ENCODE measurements at regions of chr9 and their contacts with region 1.

Region 1: GRCh38 chr9:95355500-95355899 is 38.0 kb upstream of the FANCC start:
- DNase-seq: no peak
- ATAC-seq: no peak

Region 2: GRCh38 chr9:95409650-95410426 is 54.3 kb after region 1 on chr9:
- intact Hi-C with region 1: loop called (anchors 5 kb)
- DNase-seq: no peak
- ATAC-seq: no peak

Measured in Right ventricle myocardium superior (tissue), 1 donor.